AG04449 (cell line): ENCODE measurements at regions of chr11 and their contacts with region 1.

Region 1: GRCh38 chr11:67353317-67354074 is at the start of gene POLD4:
- DNase-seq: peak; percentile 77
- H3K4me3 ChIP-seq: peak within 1 kb of the TSS; percentile 92
- CTCF ChIP-seq: no peak

Region 2: DNA sequence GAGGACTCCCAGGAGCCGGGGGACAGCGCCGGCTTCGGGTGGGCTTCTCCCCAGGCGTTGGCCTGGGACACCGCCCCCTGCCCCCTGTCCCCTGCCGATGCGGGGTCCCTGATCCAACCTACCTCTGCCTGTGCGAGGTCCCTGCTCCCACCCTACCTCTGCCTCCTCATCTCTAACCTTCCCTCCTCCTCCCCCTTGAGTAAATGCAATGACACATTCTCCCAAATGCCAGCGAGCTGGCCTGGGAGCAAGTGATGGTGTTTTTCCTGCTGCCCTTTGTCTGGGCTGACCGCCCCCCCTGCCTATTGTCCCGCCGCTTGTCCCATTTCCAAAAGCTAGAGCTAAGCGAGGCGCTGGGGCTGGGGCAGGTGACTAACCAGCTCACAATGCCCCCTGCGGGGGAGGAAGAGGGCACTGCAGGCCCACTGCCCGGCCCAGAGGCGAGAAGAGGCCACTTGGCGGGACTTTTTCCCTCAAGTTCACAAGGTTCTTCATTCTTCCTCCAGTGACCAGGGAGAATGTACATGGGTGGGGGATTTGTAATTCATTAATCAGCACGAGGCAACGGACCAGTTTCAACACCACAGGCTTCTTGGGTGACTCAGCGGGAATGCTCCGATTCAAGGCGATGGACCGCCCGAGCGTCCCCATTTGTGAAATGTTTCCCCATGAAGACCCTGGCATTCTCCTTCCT is 20.6 kb after region 1 on chr11:
- CTCF ChIA-PET with region 1: interaction called, 2,108 read pairs
- POLR2A ChIA-PET with region 1: interaction called, 76 read pairs
- DNase-seq: peak; percentile 95
- H3K4me3 ChIP-seq: peak overlapping the region; percentile 67
- CTCF ChIP-seq: peak; percentile 47

Region 3: GRCh38 chr11:67820081-67820480 is 466.6 kb after region 1 on chr11:
- CTCF ChIA-PET with region 1: no interaction called
- POLR2A ChIA-PET with region 1: no interaction called
- DNase-seq: no peak
- H3K4me3 ChIP-seq: no peak overlapping the region
- CTCF ChIP-seq: no peak